Activated CD8-positive, alpha-beta T cell treated with anti-CD3 and anti-CD28 coated beads, Interleukin-2, amount 10 ng/mL, durations not matched to agents 7 days and 5 days (primary cell): ENCODE measurements at regions of chr11 and their contacts with region 1.

Region 1: GRCh38 chr11:73404048-73404447 is 27.8 kb downstream of the RELT start:
- DNase-seq: no peak
- ATAC-seq: no peak
- H3K4me3 Mint-ChIP-seq: no peak overlapping the region
- H3K27ac Mint-ChIP-seq: no peak overlapping the region
- H3K4me1 Mint-ChIP-seq: peaks cover 4% of the 10 kb centered on the region
- H3K27me3 Mint-ChIP-seq: no peaks in the 10 kb centered on the region

Region 2: GRCh38 chr11:73393479-73394380 is 10.3 kb before region 1 on chr11:
- CTCF ChIA-PET with region 1: interaction called, 11 read pairs
- POLR2A ChIA-PET with region 1: no interaction called
- DNase-seq: peak; percentile 80
- ATAC-seq: peak; percentile 76
- H3K4me3 Mint-ChIP-seq: no peak overlapping the region
- H3K27ac Mint-ChIP-seq: peak overlapping the region; percentile 69
- H3K4me1 Mint-ChIP-seq: peaks cover 17% of the 10 kb centered on the region
- H3K27me3 Mint-ChIP-seq: no peaks in the 10 kb centered on the region

Region 3: DNA sequence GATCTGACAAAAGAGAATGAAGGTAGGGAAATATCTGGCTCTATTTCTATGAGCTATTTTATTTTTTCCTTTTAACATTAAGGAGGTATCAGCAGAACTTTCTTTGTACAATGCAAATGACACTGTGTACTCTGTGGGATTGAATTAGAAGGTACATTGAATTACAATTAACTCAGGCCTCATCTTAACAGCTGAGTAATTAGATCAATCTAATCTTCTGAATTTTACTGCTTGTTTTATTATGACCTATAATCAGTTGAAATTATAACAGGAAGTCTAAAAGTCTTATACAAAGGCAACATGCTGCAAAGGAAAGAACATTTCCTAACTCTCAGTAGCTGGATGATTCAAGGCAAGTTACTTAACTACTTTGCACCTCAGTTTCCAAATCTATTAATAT is 41.9 kb after region 1 on chr11:
- CTCF ChIA-PET with region 1: no interaction called
- POLR2A ChIA-PET with region 1: no interaction called
- DNase-seq: no peak
- ATAC-seq: no peak
- H3K4me3 Mint-ChIP-seq: no peak overlapping the region
- H3K27ac Mint-ChIP-seq: no peak overlapping the region
- H3K4me1 Mint-ChIP-seq: no peaks in the 10 kb centered on the region
- H3K27me3 Mint-ChIP-seq: no peaks in the 10 kb centered on the region

Region 4: DNA sequence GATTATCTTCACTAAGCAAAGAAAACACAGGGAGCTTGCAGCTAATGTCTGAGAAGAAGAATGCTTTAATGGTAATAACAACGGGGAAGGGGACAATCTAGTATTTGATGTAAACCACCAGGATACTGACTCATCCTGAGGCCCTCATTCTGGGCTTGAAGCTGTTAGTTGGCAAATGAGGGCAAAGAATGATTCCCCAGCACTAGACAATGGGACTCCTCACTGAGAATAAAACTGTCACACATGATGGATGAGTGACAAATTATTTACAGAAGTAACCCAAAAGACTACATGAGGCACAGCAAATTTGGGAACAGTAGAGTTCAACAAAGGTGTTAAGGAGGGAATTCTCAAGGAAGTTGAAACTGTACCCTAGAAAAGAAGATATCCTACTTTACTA is 117.6 kb after region 1 on chr11:
- CTCF ChIA-PET with region 1: no interaction called
- POLR2A ChIA-PET with region 1: no interaction called
- DNase-seq: no peak
- ATAC-seq: peak; percentile 53
- H3K4me3 Mint-ChIP-seq: no peak overlapping the region
- H3K27ac Mint-ChIP-seq: peak overlapping the region; percentile 65
- H3K4me1 Mint-ChIP-seq: peaks cover 30% of the 10 kb centered on the region
- H3K27me3 Mint-ChIP-seq: no peaks in the 10 kb centered on the region